Heart left ventricle (tissue), 16 donors: ENCODE measurements at regions of chr3 and their contacts with region 1.

Region 1: DNA sequence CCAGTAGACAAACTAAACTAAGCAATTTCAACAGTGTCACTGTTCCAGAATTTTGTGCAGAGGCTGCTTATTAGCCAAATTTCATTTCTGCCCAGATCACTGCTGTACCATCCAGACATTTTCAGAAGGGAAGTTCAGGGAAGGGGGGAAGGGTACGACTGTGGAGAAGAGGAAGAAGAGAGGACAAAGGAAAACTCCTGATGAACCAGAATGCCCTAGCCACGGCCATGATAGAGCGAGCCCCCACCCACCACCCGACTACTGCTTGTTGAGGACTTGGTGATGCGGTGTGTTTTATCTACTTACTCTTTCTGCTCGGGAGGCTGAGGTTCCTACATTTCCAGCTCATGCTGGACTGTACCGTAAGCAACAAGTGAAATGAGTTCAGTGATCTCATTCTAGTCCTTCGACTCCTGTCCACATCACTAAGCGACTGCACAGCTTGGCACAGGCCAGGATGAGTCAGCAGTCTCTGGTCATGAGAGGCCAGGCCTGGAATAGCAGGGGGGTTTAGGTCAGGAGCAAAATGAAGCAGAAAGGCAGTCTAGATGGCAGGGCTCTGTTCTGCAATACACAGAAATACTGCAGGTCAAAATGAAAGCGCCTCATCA is 330.8 kb downstream of the TIGIT start:
- DNase-seq: peak; percentile 91 to 98 (median 93)
- ATAC-seq: peak; percentile 94 to 97 (median 95)
- H3K4me3 ChIP-seq: peak overlapping the region in 11 of 12 donors; percentile 27 to 61 (median 54)
- H3K27ac ChIP-seq: peak overlapping the region; percentile 93 to 99 (median 95)
- H3K4me1 ChIP-seq: peaks cover 0 to 79% (median 57%) of the 10 kb centered on the region in 12 donors
- H3K27me3 ChIP-seq: no peaks in the 10 kb centered on the region
- CTCF ChIP-seq: no peak
- POLR2A ChIP-seq: peak in 1 of 2 donors; percentile 79

Region 2: GRCh38 chr3:114454551-114455251 is 170.0 kb before region 1 on chr3:
- intact Hi-C with region 1: loop called in 1 of 10 experiments (anchors 5 kb)
- DNase-seq: peak in 2 of 5 donors; percentile 21 to 24
- ATAC-seq: peak; percentile 19 to 53 (median 50)
- H3K4me3 ChIP-seq: peak overlapping the region in 11 of 12 donors; percentile 32 to 66 (median 53)
- H3K27ac ChIP-seq: peak overlapping the region; percentile 53 to 87 (median 72)
- H3K4me1 ChIP-seq: peaks cover 10 to 79% (median 43%) of the 10 kb centered on the region in 12 donors
- H3K27me3 ChIP-seq: no peaks in the 10 kb centered on the region
- CTCF ChIP-seq: no peak
- POLR2A ChIP-seq: no peak

Region 3: DNA sequence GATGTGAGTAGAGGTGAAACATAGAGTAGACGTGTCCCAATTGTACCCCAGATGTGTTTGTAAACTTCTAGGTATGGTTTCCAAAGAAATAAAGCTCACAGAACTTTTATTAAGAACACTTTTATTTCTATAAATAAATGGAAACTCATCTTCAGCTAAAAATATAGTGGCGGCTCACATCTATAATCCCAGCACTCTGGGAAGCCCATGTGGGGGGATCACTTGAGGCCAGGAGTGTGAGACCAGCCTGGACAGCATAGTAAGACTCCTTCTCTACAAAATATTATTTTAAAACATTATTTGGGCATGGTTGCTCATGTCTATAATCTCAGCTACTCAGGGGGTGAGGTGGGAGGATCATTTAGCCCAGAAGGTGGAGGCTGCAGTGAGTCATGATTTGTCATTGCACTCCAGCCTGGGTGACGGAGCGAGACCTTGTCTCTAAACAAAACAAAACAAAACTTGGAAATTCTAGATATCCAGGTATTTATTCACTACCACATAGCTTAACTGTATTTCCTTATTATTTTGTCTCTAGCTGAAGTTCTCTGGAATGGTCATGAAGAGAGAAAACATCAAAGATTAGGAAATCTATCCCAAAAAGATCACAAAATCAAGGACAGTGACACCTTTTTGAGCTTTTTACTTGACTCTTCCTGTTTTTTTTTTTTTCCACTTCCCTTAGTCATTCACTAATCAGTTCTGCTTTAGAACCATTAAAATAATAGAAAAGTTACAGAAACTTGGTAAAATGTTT is 72.7 kb before region 1 on chr3:
- intact Hi-C with region 1: no loop called
- DNase-seq: peak in 2 of 5 donors; percentile 39 to 40
- ATAC-seq: peak in 1 of 4 donors; percentile 64
- H3K4me3 ChIP-seq: no peak overlapping the region
- H3K27ac ChIP-seq: no peak overlapping the region
- H3K4me1 ChIP-seq: peaks cover 0 to 34% (median 10%) of the 10 kb centered on the region in 12 donors
- H3K27me3 ChIP-seq: no peaks in the 10 kb centered on the region
- CTCF ChIP-seq: no peak
- POLR2A ChIP-seq: no peak

Region 4: GRCh38 chr3:114642951-114643741 is 18.5 kb after region 1 on chr3:
- intact Hi-C with region 1: loop called in 1 of 10 experiments (anchors 2 kb)
- DNase-seq: no peak
- ATAC-seq: no peak
- H3K4me3 ChIP-seq: no peak overlapping the region
- H3K27ac ChIP-seq: no peak overlapping the region
- H3K4me1 ChIP-seq: peaks cover 0 to 7% (median 0%) of the 10 kb centered on the region in 12 donors
- H3K27me3 ChIP-seq: no peaks in the 10 kb centered on the region
- CTCF ChIP-seq: no peak
- POLR2A ChIP-seq: no peak

Region 5: DNA sequence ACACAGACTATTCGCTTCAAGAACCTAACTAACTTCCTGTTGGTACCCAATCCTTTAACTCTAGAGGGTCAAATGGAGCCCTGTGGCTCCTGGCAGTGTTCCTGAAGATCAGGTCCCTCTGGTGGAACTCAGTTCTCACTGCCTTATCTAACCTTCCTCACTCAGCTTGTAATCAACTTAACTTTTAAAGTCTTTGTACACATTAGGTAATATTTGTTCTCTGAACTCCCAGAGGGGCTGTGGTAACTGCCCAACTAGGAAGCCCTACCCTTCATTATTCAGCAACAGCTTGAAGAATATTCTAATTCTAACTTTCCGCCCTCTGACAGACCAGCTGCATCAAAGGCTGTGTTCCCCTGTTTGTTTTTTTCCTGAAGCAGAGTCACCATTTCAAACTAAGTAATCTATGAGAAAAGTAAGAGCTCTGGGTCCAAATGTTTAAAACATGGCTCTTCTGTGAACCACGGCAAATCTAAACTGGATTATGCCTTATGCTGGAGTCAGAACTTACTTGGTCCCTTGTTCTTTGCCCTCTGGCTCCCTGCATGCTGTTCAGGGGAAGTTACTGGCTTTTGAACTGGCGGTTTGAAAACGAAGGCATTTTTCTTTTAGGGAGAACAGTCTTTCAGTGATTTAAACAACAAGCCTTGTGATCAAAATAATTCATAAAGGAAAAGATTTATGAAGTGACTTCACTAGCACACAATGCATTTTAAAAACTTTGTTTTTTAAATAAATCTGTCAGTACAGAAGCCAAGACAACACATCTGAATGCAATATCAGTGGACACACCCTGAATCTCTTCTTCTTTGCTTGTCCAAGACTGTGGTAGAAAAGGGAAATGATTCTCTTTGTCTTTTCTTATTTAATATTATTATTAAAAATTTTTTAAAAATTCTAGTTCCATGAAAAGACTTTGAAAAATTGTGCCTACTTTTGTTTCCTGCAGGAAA is 34.7 kb after region 1 on chr3:
- intact Hi-C with region 1: loop called in 1 of 10 experiments (anchors 2 kb)
- DNase-seq: peak in 4 of 5 donors; percentile 19 to 34 (median 27)
- ATAC-seq: peak; percentile 81 to 94 (median 89)
- H3K4me3 ChIP-seq: peak overlapping the region in 7 of 12 donors; percentile 1 to 32 (median 11)
- H3K27ac ChIP-seq: peak overlapping the region; percentile 62 to 86 (median 79)
- H3K4me1 ChIP-seq: peaks cover 0 to 32% (median 24%) of the 10 kb centered on the region in 12 donors
- H3K27me3 ChIP-seq: no peaks in the 10 kb centered on the region
- CTCF ChIP-seq: peak in 6 of 12 donors; percentile 6 to 35 (median 25)
- POLR2A ChIP-seq: peak in 1 of 2 donors; percentile 40

Region 6: DNA sequence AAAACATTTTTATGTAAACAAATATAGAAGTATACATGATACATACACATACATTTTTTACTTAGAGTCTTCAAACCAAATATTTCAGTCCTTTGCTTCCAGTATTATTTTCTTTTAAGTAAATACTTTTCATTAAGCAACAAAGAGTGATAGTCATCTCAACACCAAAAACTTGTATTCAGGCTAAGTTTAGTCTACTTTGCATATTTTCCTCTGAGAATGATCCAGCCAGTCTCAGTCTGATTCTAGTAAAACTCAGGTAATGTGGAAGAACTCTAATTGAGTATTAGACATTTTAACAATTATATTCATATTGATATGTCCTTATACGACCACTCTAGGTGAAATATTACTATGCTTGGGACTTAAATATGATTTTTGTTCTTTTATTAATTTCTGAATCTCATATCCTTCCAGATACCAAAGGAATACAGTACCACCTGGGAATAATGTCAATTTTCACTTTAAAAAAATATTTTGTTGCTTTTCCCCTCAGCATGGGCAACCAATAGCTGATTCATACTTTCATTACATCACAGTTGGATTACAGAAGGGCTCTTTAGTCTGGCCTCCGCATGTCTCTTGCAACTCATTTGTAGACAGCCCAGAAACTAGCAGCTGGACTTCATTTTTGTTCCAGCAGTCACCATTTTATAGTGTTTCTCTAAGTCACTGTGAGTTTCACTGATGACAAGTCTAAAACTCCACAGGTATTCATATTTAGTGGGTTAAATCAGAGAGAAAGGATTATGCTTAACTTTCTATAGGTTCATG is 132.0 kb after region 1 on chr3:
- intact Hi-C with region 1: loop called in 1 of 10 experiments (anchors 10 kb)
- DNase-seq: peak in 3 of 5 donors; percentile 15 to 27 (median 23)
- ATAC-seq: peak in 3 of 4 donors; percentile 67 to 85 (median 79)
- H3K4me3 ChIP-seq: peak overlapping the region in 7 of 12 donors; percentile 8 to 55 (median 39)
- H3K27ac ChIP-seq: peak overlapping the region in 8 of 12 donors; percentile 6 to 65 (median 34)
- H3K4me1 ChIP-seq: peaks cover 0 to 20% (median 5%) of the 10 kb centered on the region in 12 donors
- H3K27me3 ChIP-seq: no peaks in the 10 kb centered on the region
- CTCF ChIP-seq: no peak
- POLR2A ChIP-seq: no peak

Region 7: DNA sequence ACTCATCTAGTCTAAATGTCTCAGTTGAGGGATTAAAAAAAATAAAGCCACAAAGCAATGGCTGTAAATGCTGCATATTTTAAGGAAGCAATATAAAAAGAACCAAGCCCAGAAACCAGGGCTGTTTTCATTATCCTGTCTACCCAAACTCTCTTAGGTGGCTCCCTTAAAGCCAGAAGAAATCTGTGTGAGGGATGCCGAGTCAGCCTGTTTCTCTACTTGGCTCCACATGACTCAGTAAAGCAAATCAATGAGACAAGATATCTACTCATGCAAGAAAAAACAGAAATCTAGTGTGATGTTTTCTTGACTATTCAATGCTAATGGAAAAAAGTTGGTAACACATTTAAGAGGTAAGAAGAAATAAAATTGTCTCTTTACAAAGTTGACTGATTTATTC is 226.2 kb after region 1 on chr3:
- intact Hi-C with region 1: no loop called
- DNase-seq: no peak
- ATAC-seq: no peak
- H3K4me3 ChIP-seq: no peak overlapping the region
- H3K27ac ChIP-seq: no peak overlapping the region
- H3K4me1 ChIP-seq: peaks cover 0 to 36% (median 12%) of the 10 kb centered on the region in 12 donors
- H3K27me3 ChIP-seq: no peaks in the 10 kb centered on the region
- CTCF ChIP-seq: no peak
- POLR2A ChIP-seq: no peak

Region 8: GRCh38 chr3:115147329-115148141 is 522.9 kb after region 1 on chr3:
- intact Hi-C with region 1: loop called in 1 of 10 experiments (anchors 2 kb)
- DNase-seq: peak; percentile 98 to 99 (median 99)
- ATAC-seq: peak; percentile 90 to 95 (median 94)
- H3K4me3 ChIP-seq: peak overlapping the region; percentile 50 to 98 (median 86)
- H3K27ac ChIP-seq: peak overlapping the region; percentile 96 to 100 (median 98)
- H3K4me1 ChIP-seq: peaks cover 0 to 27% (median 12%) of the 10 kb centered on the region in 12 donors
- H3K27me3 ChIP-seq: no peaks in the 10 kb centered on the region
- CTCF ChIP-seq: no peak
- POLR2A ChIP-seq: peak; percentile 60 to 87